ENCODE measurements at regions of chr7 and their contacts with region 1.

Region 1: GRCh38 chr7:27901028-27901760 is 161.2 kb downstream of the TAX1BP1 start:
- DNase-seq: peak; percentile 83
- H3K4me3 Mint-ChIP-seq: peak overlapping the region; percentile 37
- H3K27ac Mint-ChIP-seq: no peak overlapping the region
- H3K4me1 Mint-ChIP-seq: peaks cover 22% of the 10 kb centered on the region
- H3K27me3 Mint-ChIP-seq: peaks cover 11% of the 10 kb centered on the region

Region 2: GRCh38 chr7:27972276-27972675 is 71.1 kb after region 1 on chr7:
- intact Hi-C with region 1: loop called (anchors 5 kb)
- DNase-seq: peak; percentile 80
- H3K4me3 Mint-ChIP-seq: peak overlapping the region; percentile 78
- H3K27ac Mint-ChIP-seq: peak overlapping the region; percentile 73
- H3K4me1 Mint-ChIP-seq: peaks cover 25% of the 10 kb centered on the region
- H3K27me3 Mint-ChIP-seq: no peaks in the 10 kb centered on the region